Posterior cingulate gyrus (tissue), 11 donors: ENCODE measurements at regions of chr1 and their contacts with region 1.

Region 1: GRCh38 chr1:232477728-232478127 is 152.2 kb downstream of the SIPA1L2 start:
- DNase-seq: no peak

Region 2: GRCh38 chr1:232519186-232519585 is 41.5 kb after region 1 on chr1:
- intact Hi-C with region 1: loop called (anchors 1 kb)
- DNase-seq: peak in 7 of 10 donors; percentile 12 to 91 (median 38)

Region 3: DNA sequence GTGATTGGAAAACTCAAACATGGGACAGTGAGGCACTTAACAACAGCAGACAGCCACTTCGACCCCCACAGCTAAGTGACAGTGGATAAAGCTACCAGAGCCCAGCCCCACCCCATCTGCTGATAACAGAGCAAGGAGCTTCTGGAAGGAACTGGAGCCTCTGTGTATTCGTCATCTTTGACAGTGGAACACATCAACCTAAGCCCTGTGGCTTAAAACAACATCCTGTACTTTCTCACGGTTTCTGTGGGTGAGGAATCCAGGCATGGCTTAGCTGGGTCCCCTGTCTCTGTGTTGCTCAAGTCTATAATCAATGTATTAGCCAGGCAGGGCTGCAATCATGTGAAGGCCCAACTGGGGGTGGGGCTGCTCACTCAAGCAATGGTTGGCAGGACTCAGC is 170.6 kb after region 1 on chr1:
- intact Hi-C with region 1: no loop called
- DNase-seq: no peak